Calu3 (cell line): ENCODE measurements at regions of chr14 and their contacts with region 1.

Region 1: GRCh38 chr14:83379436-83379835 is 1845.8 kb upstream of the SEL1L start:
- DNase-seq: no peak
- H3K4me3 Mint-ChIP-seq: no peak overlapping the region
- H3K27ac Mint-ChIP-seq: no peak overlapping the region
- H3K4me1 Mint-ChIP-seq: no peaks in the 10 kb centered on the region
- H3K27me3 Mint-ChIP-seq: no peaks in the 10 kb centered on the region
- CTCF ChIP-seq: no peak

Region 2: DNA sequence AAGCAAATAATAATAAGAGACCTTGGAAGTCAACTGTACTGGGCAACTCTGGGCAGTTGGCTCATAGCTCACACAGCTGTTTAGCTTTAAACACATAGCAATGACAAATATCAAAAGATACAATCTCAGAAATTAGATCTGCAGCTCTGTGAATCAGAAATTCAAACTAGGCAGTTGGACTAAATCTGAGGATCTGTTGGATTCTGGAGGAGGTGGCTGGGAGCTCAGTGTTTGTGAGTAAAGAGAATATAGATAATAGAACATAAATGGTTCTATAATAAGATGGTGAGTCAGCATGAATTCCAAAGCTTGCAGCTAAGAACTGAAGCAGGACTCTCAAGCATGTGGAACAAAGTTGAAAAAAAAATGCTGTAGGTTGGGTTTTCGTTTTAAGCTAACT is 103.6 kb after region 1 on chr14:
- CTCF ChIA-PET with region 1: no interaction called
- intact Hi-C with region 1: no loop called
- DNase-seq: no peak
- H3K4me3 Mint-ChIP-seq: no peak overlapping the region
- H3K27ac Mint-ChIP-seq: no peak overlapping the region
- H3K4me1 Mint-ChIP-seq: no peaks in the 10 kb centered on the region
- H3K27me3 Mint-ChIP-seq: no peaks in the 10 kb centered on the region
- CTCF ChIP-seq: no peak

Region 3: GRCh38 chr14:83741269-83741668 is 361.8 kb after region 1 on chr14:
- CTCF ChIA-PET with region 1: no interaction called
- intact Hi-C with region 1: no loop called
- DNase-seq: no peak
- H3K4me3 Mint-ChIP-seq: no peak overlapping the region
- H3K27ac Mint-ChIP-seq: no peak overlapping the region
- H3K4me1 Mint-ChIP-seq: no peaks in the 10 kb centered on the region
- H3K27me3 Mint-ChIP-seq: no peaks in the 10 kb centered on the region
- CTCF ChIP-seq: no peak

Region 4: GRCh38 chr14:84064316-84065125 is 685.1 kb after region 1 on chr14:
- CTCF ChIA-PET with region 1: no interaction called
- intact Hi-C with region 1: loop called (anchors 10 kb)
- DNase-seq: no peak
- H3K4me3 Mint-ChIP-seq: no peak overlapping the region
- H3K27ac Mint-ChIP-seq: no peak overlapping the region
- H3K4me1 Mint-ChIP-seq: no peaks in the 10 kb centered on the region
- H3K27me3 Mint-ChIP-seq: no peaks in the 10 kb centered on the region
- CTCF ChIP-seq: no peak